Mammary epithelial cell (primary cell): ENCODE measurements at regions of chr22 and their contacts with region 1.

Region 1: GRCh38 chr22:38835888-38836301 is 7.9 kb downstream of the NPTXR start:
- DNase-seq: peak; percentile 55
- H3K4me3 ChIP-seq: no peak overlapping the region
- H3K27ac ChIP-seq: no peak overlapping the region
- H3K4me1 ChIP-seq: peaks cover 8% of the 10 kb centered on the region
- H3K27me3 ChIP-seq: no peaks in the 10 kb centered on the region
- CTCF ChIP-seq: no peak

Region 2: GRCh38 chr22:38802671-38803121 is 33.2 kb before region 1 on chr22:
- CTCF ChIA-PET with region 1: no interaction called
- dilution Hi-C with region 1: loop called (anchors 5 kb)
- in situ Hi-C with region 1: no loop called
- intact Hi-C with region 1: no loop called
- DNase-seq: peak; percentile 97
- H3K4me3 ChIP-seq: no peak overlapping the region
- H3K27ac ChIP-seq: peak overlapping the region; percentile 20
- H3K4me1 ChIP-seq: peaks cover 7% of the 10 kb centered on the region
- H3K27me3 ChIP-seq: no peaks in the 10 kb centered on the region
- CTCF ChIP-seq: no peak

Region 3: GRCh38 chr22:38901111-38901641 is 65.3 kb after region 1 on chr22:
- CTCF ChIA-PET with region 1: no interaction called
- dilution Hi-C with region 1: no loop called
- in situ Hi-C with region 1: no loop called
- intact Hi-C with region 1: no loop called
- DNase-seq: no peak
- H3K4me3 ChIP-seq: no peak overlapping the region
- H3K27ac ChIP-seq: no peak overlapping the region
- H3K4me1 ChIP-seq: no peaks in the 10 kb centered on the region
- H3K27me3 ChIP-seq: no peaks in the 10 kb centered on the region
- CTCF ChIP-seq: no peak

Region 4: GRCh38 chr22:38935023-38935422 is 99.1 kb after region 1 on chr22:
- CTCF ChIA-PET with region 1: no interaction called
- dilution Hi-C with region 1: loop called (anchors 5 kb)
- in situ Hi-C with region 1: no loop called
- intact Hi-C with region 1: no loop called
- DNase-seq: peak; percentile 54
- H3K4me3 ChIP-seq: no peak overlapping the region
- H3K27ac ChIP-seq: no peak overlapping the region
- H3K4me1 ChIP-seq: peaks cover 6% of the 10 kb centered on the region
- H3K27me3 ChIP-seq: no peaks in the 10 kb centered on the region
- CTCF ChIP-seq: no peak